CD4-positive, alpha-beta T cell (primary cell): ENCODE measurements at regions of chr5 and their contacts with region 1.

Region 1: DNA sequence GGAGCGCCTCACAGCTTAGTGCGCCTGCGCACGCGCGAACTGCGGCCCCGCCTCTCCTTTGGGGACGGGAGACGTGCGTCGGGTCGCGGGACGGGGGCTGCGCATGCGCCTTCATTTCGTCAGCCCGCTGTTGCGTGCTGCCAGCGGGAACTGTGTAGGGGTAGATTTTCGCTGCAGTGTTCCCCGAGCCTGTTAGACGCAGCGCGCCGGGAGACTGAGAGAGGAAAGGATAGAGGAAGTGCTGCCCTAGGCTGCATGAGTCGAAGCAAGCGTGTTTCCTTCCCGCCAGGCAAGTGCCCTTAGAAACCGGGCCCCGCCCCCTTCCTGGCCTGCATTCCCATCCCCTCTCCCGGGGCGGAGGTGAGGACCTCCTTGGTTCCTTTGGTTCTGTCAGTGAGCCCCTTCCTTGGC is 12.3 kb downstream of the ITGA1 start:
- DNase-seq: peak; percentile 90 to 98 (median 94)
- ATAC-seq: peak; percentile 87
- H3K4me3 ChIP-seq: peak overlapping the region; percentile 93
- H3K4me3 Mint-ChIP-seq: peak overlapping the region; percentile 98
- H3K27ac ChIP-seq: peak overlapping the region; percentile 46 to 75
- H3K27ac Mint-ChIP-seq: peak overlapping the region; percentile 88
- H3K4me1 ChIP-seq: peaks cover 29% of the 10 kb centered on the region
- H3K4me1 Mint-ChIP-seq: peaks cover 69% of the 10 kb centered on the region
- H3K27me3 ChIP-seq: no peaks in the 10 kb centered on the region
- H3K27me3 Mint-ChIP-seq: no peaks in the 10 kb centered on the region
- CTCF ChIP-seq: no peak

Region 2: GRCh38 chr5:52693280-52693679 is 106.7 kb before region 1 on chr5:
- CTCF ChIA-PET with region 1: interaction called, 10 read pairs
- POLR2A ChIA-PET with region 1: interaction called, 3 read pairs
- intact Hi-C with region 1: no loop called
- DNase-seq: peak in 12 of 14 experiments; percentile 7 to 64 (median 15)
- ATAC-seq: no peak
- H3K4me3 ChIP-seq: no peak overlapping the region
- H3K4me3 Mint-ChIP-seq: no peak overlapping the region
- H3K27ac ChIP-seq: no peak overlapping the region
- H3K27ac Mint-ChIP-seq: no peak overlapping the region
- H3K4me1 ChIP-seq: peaks cover 2% of the 10 kb centered on the region
- H3K4me1 Mint-ChIP-seq: peaks cover 5% of the 10 kb centered on the region
- H3K27me3 ChIP-seq: no peaks in the 10 kb centered on the region
- H3K27me3 Mint-ChIP-seq: no peaks in the 10 kb centered on the region
- CTCF ChIP-seq: peak; percentile 45

Region 3: DNA sequence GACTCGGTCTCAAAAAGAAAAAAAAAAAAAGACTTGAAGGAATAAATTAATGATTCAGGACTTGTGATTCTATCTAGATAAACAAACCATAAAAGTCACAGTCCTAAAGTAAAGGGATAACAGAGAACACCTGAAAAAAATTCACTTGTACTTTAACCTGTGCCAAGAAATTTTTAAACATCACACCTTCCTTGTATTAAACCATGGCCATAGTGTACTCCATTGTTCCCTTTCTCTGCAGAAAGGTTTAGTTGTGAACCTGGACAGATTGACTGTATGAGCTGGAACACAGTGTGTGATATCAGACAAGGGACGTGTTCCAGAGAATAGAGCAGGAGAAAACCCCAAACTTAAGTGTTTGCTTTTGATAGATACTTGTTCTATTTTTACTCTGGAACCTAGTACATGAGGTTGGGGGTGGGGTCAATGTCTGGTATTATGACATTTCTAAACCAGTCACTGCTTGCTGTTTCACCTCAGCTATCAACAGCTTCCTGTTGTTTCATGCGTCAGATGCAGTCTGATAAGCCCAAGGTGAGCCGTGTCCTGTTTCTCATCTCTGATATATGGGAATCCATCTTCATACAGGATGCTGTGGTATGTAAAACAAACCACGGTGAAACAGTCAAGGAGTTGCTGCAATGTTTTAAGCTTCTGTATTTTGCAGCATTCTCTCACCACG is 74.8 kb before region 1 on chr5:
- CTCF ChIA-PET with region 1: interaction called, 3 read pairs
- POLR2A ChIA-PET with region 1: interaction called, 22 read pairs
- intact Hi-C with region 1: no loop called
- DNase-seq: peak in 13 of 14 experiments; percentile 36 to 95 (median 67)
- ATAC-seq: peak; percentile 95
- H3K4me3 ChIP-seq: peak overlapping the region; percentile 15
- H3K4me3 Mint-ChIP-seq: peak overlapping the region; percentile 85
- H3K27ac ChIP-seq: peak overlapping the region; percentile 47 to 63
- H3K27ac Mint-ChIP-seq: peak overlapping the region; percentile 81
- H3K4me1 ChIP-seq: peaks cover 32% of the 10 kb centered on the region
- H3K4me1 Mint-ChIP-seq: peaks cover 57% of the 10 kb centered on the region
- H3K27me3 ChIP-seq: no peaks in the 10 kb centered on the region
- H3K27me3 Mint-ChIP-seq: no peaks in the 10 kb centered on the region
- CTCF ChIP-seq: no peak

Region 4: GRCh38 chr5:53109443-53110127 is 309.6 kb after region 1 on chr5 and contains the start of gene MOCS2:
- CTCF ChIA-PET with region 1: no interaction called
- POLR2A ChIA-PET with region 1: no interaction called
- intact Hi-C with region 1: loop called in 1 of 2 experiments (anchors 5 kb)
- DNase-seq: peak; percentile 79 to 96 (median 88)
- ATAC-seq: peak; percentile 96
- H3K4me3 ChIP-seq: peak within 1 kb of the TSS; percentile 88
- H3K4me3 Mint-ChIP-seq: peak within 1 kb of the TSS; percentile 94
- H3K27ac ChIP-seq: peak within 1 kb of the TSS; percentile 64 to 77
- H3K27ac Mint-ChIP-seq: peak within 1 kb of the TSS; percentile 89
- H3K4me1 ChIP-seq: peaks cover 10% of the 10 kb centered on the region
- H3K4me1 Mint-ChIP-seq: peaks cover 58% of the 10 kb centered on the region
- H3K27me3 ChIP-seq: no peaks in the 10 kb centered on the region
- H3K27me3 Mint-ChIP-seq: no peaks in the 10 kb centered on the region
- CTCF ChIP-seq: no peak
- total RNA-seq, gene MOCS2: 19.5 to 20.4 TPM